ENCODE measurements at regions of chr9 and their contacts with region 1.

Region 1: GRCh38 chr9:4762108-4762885 is 21.3 kb upstream of the AK3 start:
- DNase-seq: peak; percentile 90
- ATAC-seq: peak; percentile 86
- H3K4me3 Mint-ChIP-seq: peak overlapping the region; percentile 43
- H3K27ac Mint-ChIP-seq: peak overlapping the region; percentile 55
- H3K4me1 Mint-ChIP-seq: peaks cover 15% of the 10 kb centered on the region
- H3K27me3 Mint-ChIP-seq: peaks cover 7% of the 10 kb centered on the region

Region 2: DNA sequence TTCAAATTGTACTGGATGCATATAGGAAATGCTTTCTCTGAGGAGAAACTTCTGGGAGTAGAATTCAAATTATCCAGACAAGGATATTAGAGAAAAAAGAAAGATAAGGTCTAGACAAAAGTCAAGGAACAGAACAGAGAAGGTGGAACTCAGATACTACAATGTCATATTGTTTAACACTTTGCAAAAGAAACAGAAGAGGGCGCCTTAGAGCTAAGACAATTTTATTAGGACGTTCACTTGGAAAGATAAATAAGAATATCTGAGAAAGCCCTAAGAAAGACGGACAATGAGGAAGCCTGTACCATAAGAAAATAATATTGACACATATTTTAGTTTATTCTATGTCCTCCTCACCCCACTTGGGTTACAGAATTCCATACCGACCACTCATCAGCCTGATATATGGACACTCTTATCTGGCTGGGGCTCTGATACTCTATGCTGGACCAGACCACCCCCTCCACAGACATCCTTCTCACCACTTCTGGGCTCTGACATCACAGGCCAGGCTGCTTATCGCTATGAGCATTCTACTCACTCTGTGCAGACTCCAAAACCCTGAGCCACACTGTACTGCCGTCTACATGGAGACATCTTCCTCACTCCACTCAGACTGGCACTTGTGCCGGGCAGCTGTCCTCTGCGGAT is 12.1 kb before region 1 on chr9:
- CTCF ChIA-PET with region 1: interaction called, 21 read pairs
- POLR2A ChIA-PET with region 1: no interaction called
- intact Hi-C with region 1: no loop called
- DNase-seq: no peak
- ATAC-seq: peak; percentile 39
- H3K4me3 Mint-ChIP-seq: no peak overlapping the region
- H3K27ac Mint-ChIP-seq: no peak overlapping the region
- H3K4me1 Mint-ChIP-seq: peaks cover 18% of the 10 kb centered on the region
- H3K27me3 Mint-ChIP-seq: no peaks in the 10 kb centered on the region

Region 3: GRCh38 chr9:4826417-4827166 is 64.3 kb after region 1 on chr9:
- CTCF ChIA-PET with region 1: interaction called, 9 read pairs
- POLR2A ChIA-PET with region 1: interaction called, 10 read pairs
- intact Hi-C with region 1: no loop called
- DNase-seq: no peak
- ATAC-seq: peak; percentile 51
- H3K4me3 Mint-ChIP-seq: no peak overlapping the region
- H3K27ac Mint-ChIP-seq: no peak overlapping the region
- H3K4me1 Mint-ChIP-seq: peaks cover 9% of the 10 kb centered on the region
- H3K27me3 Mint-ChIP-seq: no peaks in the 10 kb centered on the region

Region 4: DNA sequence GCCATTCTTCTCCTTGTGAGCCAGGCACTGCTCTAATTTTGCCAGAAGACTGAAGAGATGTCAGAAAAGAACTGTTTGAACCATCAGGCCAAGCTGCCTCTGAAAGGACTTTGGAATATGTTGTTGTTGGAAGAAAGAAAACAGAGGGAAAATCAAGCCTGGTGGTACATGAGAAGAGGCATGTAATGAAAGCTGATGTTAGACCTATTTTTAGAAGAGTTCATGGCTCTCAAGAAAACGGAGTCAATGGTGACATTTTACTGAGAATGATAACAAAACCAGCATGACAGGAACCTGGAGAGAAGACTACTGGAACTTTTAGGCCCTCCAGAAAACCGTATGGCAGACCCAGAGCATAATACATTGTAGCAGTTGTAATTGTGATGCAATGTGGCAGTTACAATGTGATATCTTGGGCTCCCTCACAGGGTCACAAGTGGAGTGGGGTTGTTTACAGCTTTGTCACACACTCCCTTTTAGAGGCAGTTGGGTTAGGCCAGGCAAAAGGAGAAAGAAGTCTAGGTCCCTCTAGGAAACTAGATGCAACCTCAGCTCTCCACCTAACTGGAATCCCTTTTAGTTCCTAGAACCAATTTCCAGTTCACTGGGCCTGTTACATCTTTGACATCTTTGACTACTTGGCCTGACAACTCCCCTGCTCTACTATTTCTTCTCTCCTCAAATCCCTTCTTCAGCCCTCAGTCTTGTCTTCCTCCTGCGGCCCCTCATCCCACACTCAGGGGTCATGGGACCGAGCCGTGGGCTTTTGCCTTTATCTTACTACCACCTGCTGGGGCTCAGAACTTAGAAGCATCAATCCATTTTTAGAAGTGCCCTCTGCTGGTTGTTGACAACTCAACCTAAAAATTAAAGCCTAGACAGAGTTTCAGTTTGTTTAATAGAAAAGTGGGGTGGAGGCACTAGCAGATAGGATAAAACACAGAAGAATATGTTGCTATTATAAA is 161.6 kb after region 1 on chr9:
- CTCF ChIA-PET with region 1: interaction called, 35 read pairs
- POLR2A ChIA-PET with region 1: no interaction called
- intact Hi-C with region 1: loop called (anchors 1 to 2 kb)
- DNase-seq: no peak
- ATAC-seq: peak; percentile 78
- H3K4me3 Mint-ChIP-seq: no peak overlapping the region
- H3K27ac Mint-ChIP-seq: no peak overlapping the region
- H3K4me1 Mint-ChIP-seq: peaks cover 14% of the 10 kb centered on the region
- H3K27me3 Mint-ChIP-seq: no peaks in the 10 kb centered on the region

Region 5: GRCh38 chr9:5052838-5053237 is 290.5 kb after region 1 on chr9:
- CTCF ChIA-PET with region 1: interaction called, 4 read pairs
- POLR2A ChIA-PET with region 1: no interaction called
- intact Hi-C with region 1: loop called in 1 of 2 experiments (anchors 5 kb)
- DNase-seq: no peak
- ATAC-seq: no peak
- H3K4me3 Mint-ChIP-seq: no peak overlapping the region
- H3K27ac Mint-ChIP-seq: no peak overlapping the region
- H3K4me1 Mint-ChIP-seq: no peaks in the 10 kb centered on the region
- H3K27me3 Mint-ChIP-seq: no peaks in the 10 kb centered on the region

Region 6: GRCh38 chr9:5437254-5438216 is 675.2 kb after region 1 on chr9 and contains the start of gene PLGRKT:
- CTCF ChIA-PET with region 1: interaction called, 4 read pairs
- POLR2A ChIA-PET with region 1: no interaction called
- intact Hi-C with region 1: loop called in 1 of 2 experiments (anchors 5 kb)
- DNase-seq: peak; percentile 95
- ATAC-seq: peak; percentile 90
- H3K4me3 Mint-ChIP-seq: peak within 1 kb of the TSS; percentile 85
- H3K27ac Mint-ChIP-seq: peak within 1 kb of the TSS; percentile 99
- H3K4me1 Mint-ChIP-seq: peaks cover 55% of the 10 kb centered on the region
- H3K27me3 Mint-ChIP-seq: no peaks in the 10 kb centered on the region
- total RNA-seq, gene PLGRKT: 44.0 to 47.9 TPM